Panc1 (cell line): ENCODE measurements at regions of chr18 and their contacts with region 1.

Region 1: DNA sequence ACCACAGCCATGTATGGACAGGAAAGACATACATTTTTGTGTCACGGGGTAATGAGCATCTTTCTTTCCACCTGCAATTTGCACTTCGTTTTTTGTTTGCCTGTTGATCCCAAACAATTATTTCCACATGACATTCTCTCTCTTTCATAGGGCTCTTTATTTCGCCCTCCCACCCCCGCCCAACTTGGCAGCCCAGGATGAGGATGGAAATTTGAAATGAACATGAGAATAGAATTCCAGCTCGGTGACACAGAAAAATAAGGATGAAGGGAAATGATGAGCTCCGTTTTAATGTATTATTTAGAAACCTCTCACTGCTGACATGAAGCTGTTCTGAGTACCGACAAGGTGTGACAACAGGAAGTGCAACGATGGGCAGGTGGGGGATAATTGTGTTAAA is 443.3 kb downstream of the SOCS6 start:
- DNase-seq: no peak
- ATAC-seq: no peak
- H3K4me3 ChIP-seq: no peak overlapping the region
- H3K27ac ChIP-seq: no peak overlapping the region
- H3K4me1 ChIP-seq: no peaks in the 10 kb centered on the region
- H3K27me3 ChIP-seq: no peaks in the 10 kb centered on the region
- CTCF ChIP-seq: no peak

Region 2: GRCh38 chr18:70380915-70381896 is 351.0 kb before region 1 on chr18:
- CTCF ChIA-PET with region 1: no interaction called
- POLR2A ChIA-PET with region 1: no interaction called
- in situ Hi-C with region 1: no loop called
- intact Hi-C with region 1: no loop called
- DNase-seq: no peak
- ATAC-seq: peak; percentile 68
- H3K4me3 ChIP-seq: peak overlapping the region; percentile 13 to 32; a peak in 3 of 4 replicates
- H3K27ac ChIP-seq: peak overlapping the region; percentile 98
- H3K4me1 ChIP-seq: peaks cover 77% of the 10 kb centered on the region
- H3K27me3 ChIP-seq: no peaks in the 10 kb centered on the region
- CTCF ChIP-seq: no peak

Region 3: DNA sequence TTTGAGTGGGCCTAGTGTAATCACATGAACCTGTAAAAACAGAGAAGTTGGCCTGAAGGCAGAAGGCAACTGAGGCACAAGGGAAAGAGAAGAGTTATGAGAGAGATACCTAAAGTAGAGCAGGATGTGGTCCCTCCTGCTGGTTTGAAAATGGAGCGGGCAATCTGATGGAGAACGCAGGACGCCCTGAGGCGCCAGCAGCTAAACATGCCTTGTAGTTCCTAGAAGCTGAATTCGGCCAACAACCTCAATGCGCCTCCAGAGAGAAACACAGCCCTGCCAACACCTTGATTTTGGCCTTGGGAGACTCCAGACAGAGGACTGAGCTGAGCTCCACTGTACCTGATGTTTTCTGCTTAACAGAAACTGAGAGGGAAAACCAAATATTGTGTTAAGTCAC is 26.6 kb after region 1 on chr18:
- CTCF ChIA-PET with region 1: no interaction called
- POLR2A ChIA-PET with region 1: no interaction called
- in situ Hi-C with region 1: no loop called
- intact Hi-C with region 1: no loop called
- DNase-seq: no peak
- ATAC-seq: no peak
- H3K4me3 ChIP-seq: no peak overlapping the region
- H3K27ac ChIP-seq: no peak overlapping the region
- H3K4me1 ChIP-seq: no peaks in the 10 kb centered on the region
- H3K27me3 ChIP-seq: no peaks in the 10 kb centered on the region
- CTCF ChIP-seq: no peak

Region 4: DNA sequence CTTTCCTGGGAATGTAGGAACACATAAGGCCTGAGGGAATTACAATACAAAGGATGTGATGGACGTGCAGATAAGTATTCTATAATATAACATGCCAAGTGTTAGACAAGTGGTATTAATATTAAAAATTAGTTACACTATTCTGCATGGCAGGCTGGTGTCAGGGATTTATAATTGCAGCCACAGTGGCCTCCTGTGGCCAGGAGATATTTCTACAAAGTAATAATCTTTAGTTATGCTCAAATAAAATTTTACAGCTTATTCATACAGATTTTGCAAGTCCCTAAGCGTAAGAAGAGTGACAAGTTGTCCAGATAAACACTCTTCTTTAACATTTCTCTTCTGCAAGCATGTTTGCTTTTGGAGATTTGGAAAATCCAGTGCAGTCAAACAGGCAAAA is 1902.3 kb after region 1 on chr18:
- CTCF ChIA-PET with region 1: interaction called, 11 read pairs
- POLR2A ChIA-PET with region 1: no interaction called
- in situ Hi-C with region 1: no loop called
- intact Hi-C with region 1: no loop called
- DNase-seq: no peak
- ATAC-seq: no peak
- H3K4me3 ChIP-seq: no peak overlapping the region
- H3K27ac ChIP-seq: no peak overlapping the region
- H3K4me1 ChIP-seq: no peaks in the 10 kb centered on the region
- H3K27me3 ChIP-seq: no peaks in the 10 kb centered on the region
- CTCF ChIP-seq: no peak; the same call in 1 of the 2 replicates